IMR-90 (cell line): ENCODE measurements at regions of chr3 and their contacts with region 1.

Region 1: GRCh38 chr3:69193749-69194148 is 71.4 kb upstream of the LMOD3 start:
- DNase-seq: no peak
- ATAC-seq: no peak
- H3K4me3 ChIP-seq: no peak overlapping the region
- H3K27ac ChIP-seq: no peak overlapping the region
- H3K4me1 ChIP-seq: no peaks in the 10 kb centered on the region
- H3K27me3 ChIP-seq: peaks cover 20% of the 10 kb centered on the region
- CTCF ChIP-seq: no peak
- POLR2A ChIP-seq: no peak
- RAD21 ChIP-seq: no peak

Region 2: GRCh38 chr3:69095636-69096035 is 98.1 kb before region 1 on chr3:
- CTCF ChIA-PET with region 1: no interaction called
- POLR2A ChIA-PET with region 1: interaction called, 11 read pairs
- dilution Hi-C with region 1: no loop called
- in situ Hi-C with region 1: no loop called
- intact Hi-C with region 1: no loop called
- DNase-seq: no peak
- ATAC-seq: no peak
- H3K4me3 ChIP-seq: no peak overlapping the region
- H3K27ac ChIP-seq: no peak overlapping the region
- H3K4me1 ChIP-seq: peaks cover 10% of the 10 kb centered on the region
- H3K27me3 ChIP-seq: no peaks in the 10 kb centered on the region
- CTCF ChIP-seq: no peak
- POLR2A ChIP-seq: no peak
- RAD21 ChIP-seq: no peak